ENCODE measurements at regions of chr7 and their contacts with region 1.

Region 1: GRCh38 chr7:7182156-7183060 is at the start of gene C1GALT1:
- H3K4me3 Mint-ChIP-seq: peak within 1 kb of the TSS; percentile 76
- H3K27ac Mint-ChIP-seq: peak within 1 kb of the TSS; percentile 98
- H3K4me1 Mint-ChIP-seq: peaks cover 14% of the 10 kb centered on the region
- H3K27me3 Mint-ChIP-seq: no peaks in the 10 kb centered on the region

Region 2: GRCh38 chr7:7103343-7104313 is 78.8 kb before region 1 on chr7:
- intact Hi-C with region 1: loop called (anchors 5 kb)
- H3K4me3 Mint-ChIP-seq: no peak overlapping the region
- H3K27ac Mint-ChIP-seq: peak overlapping the region; percentile 50
- H3K4me1 Mint-ChIP-seq: peaks cover 17% of the 10 kb centered on the region
- H3K27me3 Mint-ChIP-seq: peaks cover 1% of the 10 kb centered on the region

Region 3: DNA sequence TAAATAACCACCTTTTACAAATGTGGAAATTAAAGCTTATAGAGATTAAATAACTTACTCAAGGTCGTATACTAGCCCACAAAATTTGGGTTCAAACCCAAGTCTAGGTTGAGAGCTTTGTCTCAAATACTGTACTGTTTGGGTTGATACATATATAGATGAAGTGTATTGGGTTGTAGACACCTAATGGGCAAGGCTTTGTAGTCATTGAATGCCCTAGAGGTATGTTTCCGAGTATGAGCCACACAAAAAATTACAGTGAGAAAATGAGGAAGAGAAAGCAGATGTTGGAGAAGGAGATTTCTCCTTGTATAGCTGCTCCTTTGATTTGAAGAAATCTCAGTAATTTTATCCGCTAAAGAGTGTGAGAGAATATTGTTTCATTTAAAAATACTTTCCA is 60.5 kb after region 1 on chr7:
- intact Hi-C with region 1: loop called (anchors 5 kb)
- H3K4me3 Mint-ChIP-seq: no peak overlapping the region
- H3K27ac Mint-ChIP-seq: no peak overlapping the region
- H3K4me1 Mint-ChIP-seq: peaks cover 7% of the 10 kb centered on the region
- H3K27me3 Mint-ChIP-seq: no peaks in the 10 kb centered on the region

Region 4: GRCh38 chr7:7251742-7252141 is 69.3 kb after region 1 on chr7:
- intact Hi-C with region 1: loop called (anchors 5 kb)
- H3K4me3 Mint-ChIP-seq: no peak overlapping the region
- H3K27ac Mint-ChIP-seq: peak overlapping the region; percentile 64
- H3K4me1 Mint-ChIP-seq: peaks cover 26% of the 10 kb centered on the region
- H3K27me3 Mint-ChIP-seq: no peaks in the 10 kb centered on the region

Measured in dendritic cell treated with granulocyte-macrophage colony-stimulating factor and Interleukin-4, amounts not matched to agents 40 ng/mL and 50 ng/mL, for 4 days (primary cell).